Activated CD8-positive, alpha-beta T cell treated with anti-CD3 and anti-CD28 coated beads for 36 hours (primary cell): ENCODE measurements at regions of chr4 and their contacts with region 1.

Region 1: DNA sequence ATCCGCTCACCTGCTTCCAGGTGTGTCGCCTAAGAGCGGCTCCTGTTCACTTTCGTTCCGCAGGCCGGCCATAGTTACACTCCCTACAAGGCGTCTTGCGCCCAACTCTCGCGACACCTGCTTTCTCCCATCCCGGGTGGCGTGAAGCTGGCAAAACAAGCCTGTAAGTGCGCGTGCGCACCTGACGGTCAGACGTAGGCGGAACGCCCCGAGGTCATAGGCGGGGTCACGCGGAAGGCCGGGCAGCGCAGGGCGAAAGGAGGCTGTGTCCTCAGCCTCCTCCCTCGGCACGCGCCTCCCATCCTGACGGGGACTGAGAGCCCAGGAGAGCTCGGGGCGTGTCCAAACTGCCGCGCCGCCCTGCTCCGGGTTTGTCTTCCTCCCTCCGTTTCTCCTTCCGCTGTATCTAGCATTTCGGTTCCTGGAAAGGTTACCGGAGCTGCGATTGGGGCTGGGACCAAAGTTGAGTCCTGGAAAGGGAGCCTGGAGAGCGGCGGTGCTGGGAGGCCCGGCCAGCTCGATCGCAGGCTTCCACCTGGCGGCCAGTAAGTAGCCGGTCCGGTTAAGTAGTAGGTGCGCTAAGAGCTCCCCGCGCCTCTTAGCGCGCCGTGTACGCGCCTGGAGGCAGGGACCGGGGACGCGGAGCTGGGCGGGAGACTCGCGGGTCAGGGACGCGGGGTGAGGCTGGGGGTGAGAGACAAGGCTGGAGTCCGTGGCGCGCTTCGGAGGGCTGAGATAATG is at the starts of genes ABHD18 and MFSD8:
- DNase-seq: peak; percentile 99
- ATAC-seq: peak; percentile 96
- H3K4me3 Mint-ChIP-seq: peak within 1 kb of the TSS; percentile 95
- H3K27ac Mint-ChIP-seq: peak within 1 kb of the TSS; percentile 98
- H3K4me1 Mint-ChIP-seq: peaks cover 34% of the 10 kb centered on the region
- H3K27me3 Mint-ChIP-seq: no peaks in the 10 kb centered on the region
- CTCF ChIP-seq: no peak
- total RNA-seq, gene ABHD18: 22.2 to 22.6 TPM
- total RNA-seq, gene MFSD8: 12.5 to 14.2 TPM

Region 2: DNA sequence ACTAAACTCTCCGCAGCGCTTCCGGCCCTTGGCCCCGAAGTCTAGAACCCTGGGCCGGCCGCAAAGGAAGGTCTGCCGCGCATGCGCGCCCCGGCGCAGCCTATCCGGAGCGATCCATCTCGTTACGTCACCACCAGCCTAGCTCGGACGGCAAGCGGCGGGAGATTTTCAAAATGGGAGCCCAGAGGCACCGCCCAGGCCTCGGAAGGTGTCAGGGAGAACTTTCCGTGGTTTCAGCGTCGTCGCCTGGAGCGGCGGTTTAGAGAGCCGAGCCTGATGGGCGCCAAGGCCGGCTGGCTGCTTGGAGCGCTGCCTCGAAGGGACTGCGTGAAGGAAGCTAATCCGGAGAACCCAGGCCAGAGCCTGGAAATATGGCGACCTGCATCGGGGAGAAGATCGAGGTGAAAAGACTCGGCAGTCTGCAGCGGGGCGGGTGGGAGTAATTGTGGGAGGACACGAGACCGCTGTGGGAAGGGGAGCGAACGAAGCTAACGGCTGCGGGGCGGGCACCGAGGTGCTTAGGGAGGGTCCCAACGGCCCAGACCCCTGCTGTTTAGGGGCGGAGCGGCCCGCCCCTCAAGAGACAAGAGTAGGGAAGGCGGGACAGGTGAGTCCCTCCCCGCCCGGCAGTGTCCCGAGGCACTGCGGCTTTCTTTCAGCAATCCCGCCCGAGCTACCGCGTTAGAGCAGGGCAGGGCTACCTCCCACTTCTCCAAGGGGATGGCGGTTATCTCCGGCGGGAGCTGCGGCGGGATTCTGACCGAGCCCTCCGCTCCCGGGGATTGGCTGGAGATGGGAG is 84.3 kb before region 1 on chr4 and contains the start of gene PLK4:
- CTCF ChIA-PET with region 1: interaction called, 3 read pairs
- POLR2A ChIA-PET with region 1: interaction called, 17 read pairs
- intact Hi-C with region 1: loop called (anchors 2 kb)
- DNase-seq: peak; percentile 97
- ATAC-seq: peak; percentile 96
- H3K4me3 Mint-ChIP-seq: peak within 1 kb of the TSS; percentile 98
- H3K27ac Mint-ChIP-seq: peak within 1 kb of the TSS; percentile 98
- H3K4me1 Mint-ChIP-seq: peaks cover 11% of the 10 kb centered on the region
- H3K27me3 Mint-ChIP-seq: no peaks in the 10 kb centered on the region
- CTCF ChIP-seq: no peak
- total RNA-seq, gene PLK4: 42.0 to 45.1 TPM

Region 3: GRCh38 chr4:128060699-128061565 is 95.7 kb after region 1 on chr4 and contains the start of gene LARP1B:
- CTCF ChIA-PET with region 1: no interaction called
- POLR2A ChIA-PET with region 1: interaction called, 17 read pairs
- intact Hi-C with region 1: loop called (anchors 5 kb)
- DNase-seq: peak; percentile 95
- ATAC-seq: peak; percentile 94
- H3K4me3 Mint-ChIP-seq: peak within 1 kb of the TSS; percentile 84
- H3K27ac Mint-ChIP-seq: peak within 1 kb of the TSS; percentile 94
- H3K4me1 Mint-ChIP-seq: peaks cover 17% of the 10 kb centered on the region
- H3K27me3 Mint-ChIP-seq: no peaks in the 10 kb centered on the region
- CTCF ChIP-seq: no peak
- total RNA-seq, gene LARP1B: 23.8 to 23.9 TPM

Region 4: GRCh38 chr4:129093191-129093920 is 1128.1 kb after region 1 on chr4 and contains the start of gene SCLT1:
- CTCF ChIA-PET with region 1: no interaction called
- POLR2A ChIA-PET with region 1: no interaction called
- intact Hi-C with region 1: loop called (anchors 10 kb)
- DNase-seq: peak; percentile 99
- ATAC-seq: peak; percentile 92
- H3K4me3 Mint-ChIP-seq: no peak within 1 kb of the TSS
- H3K27ac Mint-ChIP-seq: peak within 1 kb of the TSS; percentile 32
- H3K4me1 Mint-ChIP-seq: peaks cover 39% of the 10 kb centered on the region
- H3K27me3 Mint-ChIP-seq: no peaks in the 10 kb centered on the region
- CTCF ChIP-seq: no peak
- total RNA-seq, gene SCLT1: 18.5 to 19.7 TPM